ENCODE measurements at regions of chr1 and their contacts with region 1.

Region 1: GRCh38 chr1:33986390-33987095 is 122.7 kb downstream of the HMGB4 start:
- DNase-seq: peak; percentile 72 to 92
- H3K4me3 ChIP-seq: no peak overlapping the region
- H3K27ac ChIP-seq: peak overlapping the region; percentile 60 to 82
- H3K4me1 ChIP-seq: peaks cover 11 to 20% of the 10 kb centered on the region in 2 donors
- H3K27me3 ChIP-seq: no peaks in the 10 kb centered on the region
- CTCF ChIP-seq: no peak

Region 2: DNA sequence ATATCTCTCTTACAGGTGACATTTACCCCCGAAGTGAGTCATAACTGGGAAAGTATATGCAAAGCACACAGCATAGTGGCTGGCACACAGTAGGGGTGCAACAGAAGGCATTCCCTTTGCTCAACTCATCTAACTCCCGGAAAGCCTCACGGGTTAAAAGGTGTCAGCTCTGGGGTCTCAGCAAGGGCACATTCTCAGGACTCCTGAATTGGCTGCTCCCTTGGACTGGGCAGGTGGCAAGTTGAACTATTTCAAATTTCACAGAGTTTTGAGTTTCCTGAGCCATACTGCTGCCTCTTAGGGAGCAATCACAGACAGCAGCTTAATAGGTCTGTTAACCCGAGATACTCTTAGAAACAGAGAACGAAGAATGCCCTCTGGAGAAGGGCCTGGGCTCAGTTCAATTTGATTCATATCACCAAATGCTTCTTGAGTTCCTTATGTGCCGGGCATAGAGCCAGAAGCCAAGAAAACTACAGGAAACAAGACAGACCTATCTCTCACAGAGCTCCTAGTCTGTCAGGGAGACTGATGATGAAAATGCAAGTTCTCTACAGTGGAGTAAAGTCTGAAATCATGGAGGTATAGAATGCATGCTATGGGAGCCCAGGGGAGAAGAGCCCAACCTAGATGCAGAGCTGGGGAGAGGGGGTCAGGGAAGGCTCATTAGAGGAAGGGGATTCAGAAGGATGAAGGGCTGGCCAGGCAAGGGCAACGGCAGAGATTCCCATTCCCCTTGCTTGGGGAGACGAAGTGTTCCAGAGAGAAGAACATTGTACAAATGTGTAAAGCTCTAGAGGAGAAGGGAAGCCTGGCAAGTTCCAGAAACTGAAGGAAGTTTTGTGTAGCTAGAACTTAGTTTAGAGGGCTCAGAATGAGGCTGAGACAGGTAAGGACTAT is 266.5 kb before region 1 on chr1:
- intact Hi-C with region 1: no loop called
- DNase-seq: no peak
- H3K4me3 ChIP-seq: no peak overlapping the region
- H3K27ac ChIP-seq: no peak overlapping the region
- H3K4me1 ChIP-seq: no peaks in the 10 kb centered on the region
- H3K27me3 ChIP-seq: no peaks in the 10 kb centered on the region
- CTCF ChIP-seq: no peak

Region 3: GRCh38 chr1:33763406-33763805 is 223.1 kb before region 1 on chr1:
- intact Hi-C with region 1: loop called (anchors 5 kb)
- DNase-seq: peak in 1 of 2 donors; percentile 43
- H3K4me3 ChIP-seq: no peak overlapping the region
- H3K27ac ChIP-seq: peak overlapping the region in 1 of 2 donors; percentile 80
- H3K4me1 ChIP-seq: peaks cover 5 to 31% of the 10 kb centered on the region in 2 donors
- H3K27me3 ChIP-seq: no peaks in the 10 kb centered on the region
- CTCF ChIP-seq: no peak

Region 4: GRCh38 chr1:33893147-33893830 is 93.3 kb before region 1 on chr1:
- intact Hi-C with region 1: loop called (anchors 2 kb)
- DNase-seq: peak in 1 of 2 donors; percentile 79
- H3K4me3 ChIP-seq: no peak overlapping the region
- H3K27ac ChIP-seq: peak overlapping the region; percentile 91 to 93
- H3K4me1 ChIP-seq: peaks cover 6 to 16% of the 10 kb centered on the region in 2 donors
- H3K27me3 ChIP-seq: no peaks in the 10 kb centered on the region
- CTCF ChIP-seq: no peak

Region 5: DNA sequence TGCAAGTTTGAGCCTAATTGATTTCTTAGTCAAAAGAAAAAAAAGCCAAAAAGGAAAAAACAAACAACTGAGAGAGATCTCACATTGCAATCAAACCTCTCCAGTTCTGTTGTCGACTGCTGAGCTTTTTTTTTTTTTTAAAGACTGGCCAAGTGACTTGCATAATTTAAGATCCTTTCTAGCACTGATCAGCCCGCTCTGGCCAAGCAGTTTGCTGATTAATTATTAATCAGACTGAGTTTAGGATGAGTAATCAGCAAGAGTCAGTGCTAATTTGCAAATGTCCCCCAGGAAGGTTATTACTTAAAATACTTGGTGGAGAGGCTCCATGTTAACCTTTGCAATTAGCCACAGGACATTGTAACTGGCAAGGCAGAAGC is 83.3 kb before region 1 on chr1:
- intact Hi-C with region 1: loop called (anchors 2 kb)
- DNase-seq: no peak
- H3K4me3 ChIP-seq: peak overlapping the region in 1 of 2 donors; percentile 23
- H3K27ac ChIP-seq: peak overlapping the region; percentile 51 to 81
- H3K4me1 ChIP-seq: peaks cover 7 to 17% of the 10 kb centered on the region in 2 donors
- H3K27me3 ChIP-seq: no peaks in the 10 kb centered on the region
- CTCF ChIP-seq: no peak

Measured in ascending aorta (tissue), 2 donors.